ENCODE measurements at regions of chr12 and their contacts with region 1.

Region 1: GRCh38 chr12:10749700-10750384 is 26.7 kb upstream of the YBX3 start:
- DNase-seq: peak; percentile 56 to 73 (median 61)
- ATAC-seq: peak; percentile 67 to 95 (median 90)
- H3K4me3 ChIP-seq: peak overlapping the region in 10 of 12 donors; percentile 13 to 53 (median 42)
- H3K27ac ChIP-seq: peak overlapping the region in 5 of 12 donors; percentile 10 to 51 (median 31)
- H3K4me1 ChIP-seq: peaks cover 0 to 11% (median 2%) of the 10 kb centered on the region in 12 donors
- H3K27me3 ChIP-seq: no peaks in the 10 kb centered on the region
- CTCF ChIP-seq: peak; percentile 81 to 98 (median 90)
- POLR2A ChIP-seq: no peak

Region 2: DNA sequence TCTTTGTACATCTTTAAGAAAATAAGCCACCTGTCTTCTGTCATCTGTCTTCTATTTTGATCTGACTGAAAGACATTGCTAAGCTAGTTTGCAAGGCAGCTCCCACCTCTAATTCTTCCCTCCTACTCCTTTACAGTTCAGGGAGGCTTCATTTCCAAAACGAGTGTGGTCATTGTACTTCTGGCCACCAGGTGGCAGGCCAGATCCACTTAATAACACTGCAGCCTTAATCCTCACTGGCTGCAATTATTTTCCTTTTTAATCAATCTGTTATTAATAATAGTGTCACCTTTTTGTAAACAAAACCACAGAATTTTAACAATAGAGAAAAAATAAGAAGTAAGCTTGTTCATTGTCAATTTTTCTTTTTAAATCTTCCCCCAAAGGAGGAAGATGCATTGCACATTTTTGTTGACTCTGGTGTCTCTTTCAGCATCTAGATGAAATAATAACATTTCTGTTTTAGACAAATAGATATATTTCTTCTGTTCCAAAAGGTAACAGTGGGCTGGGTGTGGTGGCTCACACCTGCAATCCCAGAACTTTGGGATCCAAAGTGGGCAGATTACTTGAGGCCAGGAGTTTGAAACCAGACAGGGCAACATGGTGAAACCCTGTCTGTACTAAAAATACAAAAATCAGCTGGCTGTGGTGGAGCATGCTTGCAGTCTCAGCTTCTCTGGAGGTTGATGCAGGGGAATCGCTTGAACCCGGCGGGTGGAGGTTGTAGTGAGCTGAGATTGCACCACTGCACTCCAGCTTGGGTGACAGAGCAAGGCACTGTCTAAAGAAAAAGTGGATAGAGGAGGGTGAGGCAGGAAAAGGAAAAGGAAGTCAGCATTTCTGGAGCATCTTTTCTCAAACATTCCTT is 513.8 kb before region 1 on chr12:
- intact Hi-C with region 1: loop called in 3 of 10 experiments (anchors 5 kb)
- DNase-seq: peak in 1 of 5 donors; percentile 35
- ATAC-seq: peak; percentile 54 to 84 (median 81)
- H3K4me3 ChIP-seq: no peak overlapping the region
- H3K27ac ChIP-seq: no peak overlapping the region
- H3K4me1 ChIP-seq: peaks cover 0 to 7% (median 0%) of the 10 kb centered on the region in 12 donors
- H3K27me3 ChIP-seq: no peaks in the 10 kb centered on the region
- CTCF ChIP-seq: peak; percentile 73 to 91 (median 86)
- POLR2A ChIP-seq: no peak

Region 3: DNA sequence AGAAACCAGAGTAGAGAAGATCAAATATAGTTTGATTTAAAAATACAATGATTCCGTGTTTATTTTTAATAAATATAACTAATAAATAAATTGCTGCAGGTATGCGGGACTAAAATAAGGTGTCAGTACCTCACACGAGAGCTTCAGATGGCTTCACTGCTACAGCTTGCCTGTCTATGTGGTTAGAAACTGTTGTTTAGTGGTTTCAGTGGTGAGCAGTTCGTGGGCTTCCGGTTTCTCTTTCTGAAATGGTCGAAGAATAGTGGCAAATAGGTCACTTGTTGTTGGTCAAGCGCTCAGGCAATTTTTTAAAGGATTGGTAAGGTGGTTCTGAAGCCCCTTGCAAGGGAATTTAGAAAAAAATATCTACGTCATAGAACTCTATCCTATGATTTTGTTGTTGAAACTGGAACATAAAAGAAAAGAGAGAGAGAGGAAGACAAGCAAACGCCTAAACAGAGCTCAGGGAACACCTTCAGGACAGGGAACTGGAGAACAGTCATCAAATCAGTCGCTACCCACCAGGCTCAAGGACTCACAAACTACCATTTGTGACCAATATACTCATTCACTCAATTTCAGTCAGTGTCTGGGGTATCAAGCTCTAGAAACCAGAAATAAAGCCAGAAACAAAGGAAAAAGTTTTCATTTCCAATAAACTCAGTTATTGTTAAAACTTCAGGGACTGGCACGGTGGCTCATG is 505.9 kb before region 1 on chr12:
- intact Hi-C with region 1: loop called in 3 of 10 experiments (anchors 5 kb)
- DNase-seq: no peak
- ATAC-seq: no peak
- H3K4me3 ChIP-seq: peak overlapping the region in 1 of 12 donors; percentile 37
- H3K27ac ChIP-seq: no peak overlapping the region
- H3K4me1 ChIP-seq: peaks cover 0 to 4% (median 0%) of the 10 kb centered on the region in 12 donors
- H3K27me3 ChIP-seq: no peaks in the 10 kb centered on the region
- CTCF ChIP-seq: no peak
- POLR2A ChIP-seq: no peak

Region 4: DNA sequence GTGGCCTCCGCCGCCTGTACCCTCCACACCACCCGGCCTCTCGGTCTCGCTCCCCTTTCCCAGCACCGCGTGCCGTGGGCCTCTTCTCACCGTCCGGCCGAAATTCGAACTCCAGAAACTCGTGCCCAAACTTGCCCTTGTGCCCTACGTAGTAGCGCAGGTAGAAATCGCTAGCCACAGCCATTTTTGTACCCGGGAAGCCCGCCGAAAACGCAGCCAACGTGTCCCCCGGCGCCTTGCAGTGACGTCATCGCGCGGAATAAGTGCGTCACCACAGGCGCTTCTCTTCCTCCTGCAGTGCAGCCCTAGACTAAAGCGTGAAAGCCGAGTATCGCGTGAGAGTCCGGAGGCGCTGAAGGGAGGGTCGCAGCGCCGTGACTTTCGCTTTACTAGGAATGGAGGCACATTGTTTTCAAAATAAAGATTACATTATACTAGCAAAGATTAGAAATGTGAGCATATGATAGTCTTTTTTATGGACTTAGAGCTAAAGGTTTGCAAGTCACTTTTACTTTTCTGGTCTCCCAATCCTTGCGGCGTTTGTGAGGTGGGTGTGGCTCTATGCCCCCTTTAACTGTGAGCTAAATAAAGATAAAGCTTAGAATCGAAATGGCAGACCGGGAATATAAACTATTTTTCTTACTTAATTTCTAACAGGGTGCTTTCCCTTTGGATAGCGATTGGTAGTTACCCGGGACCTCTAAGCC is 136.3 kb before region 1 on chr12 and contains the start of gene MAGOHB:
- intact Hi-C with region 1: loop called (anchors 1 to 5 kb)
- DNase-seq: peak; percentile 96 to 97 (median 96)
- ATAC-seq: peak; percentile 99 to 100 (median 100)
- H3K4me3 ChIP-seq: peak within 1 kb of the TSS; percentile 63 to 91 (median 79)
- H3K27ac ChIP-seq: peak within 1 kb of the TSS; percentile 41 to 91 (median 87)
- H3K4me1 ChIP-seq: peaks cover 0 to 21% (median 9%) of the 10 kb centered on the region in 12 donors
- H3K27me3 ChIP-seq: peaks cover 0 to 6% (median 0%) of the 10 kb centered on the region in 9 donors
- CTCF ChIP-seq: peak in 1 of 12 donors; percentile 7
- POLR2A ChIP-seq: peak in 1 of 2 donors; percentile 75
- total RNA-seq, gene MAGOHB: 1.8 to 18.1 (median 12.7) TPM

Region 5: DNA sequence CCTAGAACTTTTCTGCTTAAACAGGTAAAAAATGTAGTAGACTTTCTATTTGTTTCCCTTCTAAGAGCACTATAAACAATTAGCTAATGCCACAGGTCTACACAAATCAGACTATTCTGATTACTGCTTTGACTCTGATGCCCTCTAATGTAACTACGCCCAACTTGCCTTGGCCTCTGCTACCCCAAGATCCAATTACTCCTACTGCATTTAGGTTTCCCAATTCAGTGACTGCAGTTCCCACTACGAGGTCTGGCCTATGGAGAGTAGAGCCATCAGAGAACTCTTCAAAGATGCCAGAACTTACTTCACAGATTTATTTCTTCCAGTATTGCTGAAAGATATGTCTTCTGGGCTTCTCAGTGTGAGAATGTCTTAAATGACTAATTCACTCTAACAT is 60.7 kb before region 1 on chr12:
- intact Hi-C with region 1: loop called in 1 of 10 experiments (anchors 10 kb)
- DNase-seq: no peak
- ATAC-seq: no peak
- H3K4me3 ChIP-seq: no peak overlapping the region
- H3K27ac ChIP-seq: no peak overlapping the region
- H3K4me1 ChIP-seq: no peaks in the 10 kb centered on the region
- H3K27me3 ChIP-seq: no peaks in the 10 kb centered on the region
- CTCF ChIP-seq: no peak
- POLR2A ChIP-seq: no peak

Region 6: DNA sequence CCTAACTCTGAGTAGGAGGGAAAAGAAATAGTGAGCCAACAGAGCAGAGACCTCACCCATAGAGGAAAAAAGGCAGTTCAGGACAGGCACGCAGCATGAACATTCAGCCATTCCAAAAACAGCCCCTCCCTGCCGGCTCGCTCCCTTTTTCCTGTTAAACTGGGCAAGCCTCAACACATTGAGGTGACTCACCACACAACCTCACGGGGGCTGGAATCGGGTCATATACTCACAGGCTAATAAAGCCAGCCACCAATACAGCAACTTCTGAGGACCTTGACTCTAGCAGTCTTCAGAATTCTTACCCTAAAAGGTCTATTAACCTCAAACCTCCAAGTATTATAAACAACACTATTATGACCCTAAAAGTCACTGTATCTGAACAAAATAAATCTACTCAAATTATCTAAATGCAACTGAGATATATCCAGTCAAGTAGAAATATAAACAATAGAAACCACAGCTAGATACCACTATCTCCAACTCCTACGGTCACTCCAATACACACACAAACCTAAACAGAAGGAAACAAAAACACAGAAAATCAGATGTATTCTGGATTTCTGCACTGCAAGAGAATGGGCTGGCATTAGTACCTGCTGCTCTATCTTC is 33.0 kb before region 1 on chr12:
- intact Hi-C with region 1: loop called in 4 of 10 experiments (anchors 2 to 5 kb)
- DNase-seq: peak; percentile 78 to 87 (median 84)
- ATAC-seq: peak; percentile 75 to 94 (median 92)
- H3K4me3 ChIP-seq: peak overlapping the region in 8 of 12 donors; percentile 12 to 30 (median 21)
- H3K27ac ChIP-seq: peak overlapping the region; percentile 37 to 100 (median 98)
- H3K4me1 ChIP-seq: peaks cover 13 to 66% (median 54%) of the 10 kb centered on the region in 12 donors
- H3K27me3 ChIP-seq: no peaks in the 10 kb centered on the region
- CTCF ChIP-seq: no peak
- POLR2A ChIP-seq: no peak

Region 7: GRCh38 chr12:10721651-10722501 is 28.0 kb before region 1 on chr12:
- intact Hi-C with region 1: loop called in 4 of 10 experiments (anchors 2 to 5 kb)
- DNase-seq: peak; percentile 88 to 96 (median 90)
- ATAC-seq: peak; percentile 88 to 94 (median 92)
- H3K4me3 ChIP-seq: peak overlapping the region; percentile 77 to 100 (median 92)
- H3K27ac ChIP-seq: peak overlapping the region; percentile 92 to 100 (median 98)
- H3K4me1 ChIP-seq: peaks cover 13 to 60% (median 51%) of the 10 kb centered on the region in 12 donors
- H3K27me3 ChIP-seq: peaks cover 0 to 5% (median 0%) of the 10 kb centered on the region in 9 donors
- CTCF ChIP-seq: no peak
- POLR2A ChIP-seq: peak in 1 of 2 donors; percentile 30